WTC11 (cell line): ENCODE measurements at regions of chr19 and their contacts with region 1.

Region 1: DNA sequence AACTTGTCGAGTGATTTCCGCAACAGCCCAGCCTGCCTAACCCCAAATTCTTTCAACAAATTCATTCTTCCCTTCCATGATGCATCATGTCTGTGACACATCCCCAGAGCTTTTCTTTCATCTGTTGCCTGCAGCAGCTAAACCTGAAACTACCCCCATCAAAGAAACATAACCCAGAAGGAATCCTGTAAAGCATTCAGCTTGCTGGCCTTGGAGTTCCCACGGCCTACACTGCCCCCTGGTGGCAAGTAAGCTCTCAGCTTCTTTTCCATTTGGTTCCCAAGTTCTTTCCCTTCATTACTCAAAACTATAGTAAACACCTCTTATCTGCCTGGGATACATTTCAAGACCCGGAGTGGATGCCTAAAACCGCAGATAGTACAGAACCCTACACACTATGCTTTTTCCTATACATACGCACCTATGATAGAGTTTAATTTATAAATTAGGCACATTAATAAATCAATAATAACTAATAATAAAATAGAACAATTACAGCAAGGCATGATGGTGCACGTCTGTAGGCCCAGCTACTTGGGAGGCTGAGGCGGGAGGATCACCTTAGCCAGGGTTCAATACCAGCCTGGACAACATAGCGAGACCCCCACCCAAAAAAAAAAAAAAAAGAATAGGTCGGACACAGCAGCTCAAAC is 7.4 kb downstream of the ETHE1 start:
- DNase-seq: peak; percentile 83
- ATAC-seq: no peak; the same call in 1 of the 2 replicates
- H3K4me3 Mint-ChIP-seq: no peak overlapping the region
- H3K27ac Mint-ChIP-seq: peak overlapping the region; percentile 32; the same call in 1 of the 2 replicates
- H3K4me1 Mint-ChIP-seq: peaks cover 3% of the 10 kb centered on the region
- H3K27me3 Mint-ChIP-seq: no peaks in the 10 kb centered on the region
- CTCF ChIP-seq: peak; percentile 92

Region 2: GRCh38 chr19:43316592-43317319 is 202.8 kb before region 1 on chr19:
- CTCF ChIA-PET with region 1: no interaction called
- POLR2A ChIA-PET with region 1: no interaction called
- DNase-seq: peak; percentile 81
- ATAC-seq: peak; percentile 92
- H3K4me3 Mint-ChIP-seq: peak overlapping the region; percentile 28; the same call in 1 of the 2 replicates
- H3K27ac Mint-ChIP-seq: peak overlapping the region; percentile 61; the same call in 1 of the 2 replicates
- H3K4me1 Mint-ChIP-seq: peaks cover 27% of the 10 kb centered on the region
- H3K27me3 Mint-ChIP-seq: no peaks in the 10 kb centered on the region
- CTCF ChIP-seq: 0 out of 2 replicates have a peak, but pooled peaks have one; percentile 32

Region 3: DNA sequence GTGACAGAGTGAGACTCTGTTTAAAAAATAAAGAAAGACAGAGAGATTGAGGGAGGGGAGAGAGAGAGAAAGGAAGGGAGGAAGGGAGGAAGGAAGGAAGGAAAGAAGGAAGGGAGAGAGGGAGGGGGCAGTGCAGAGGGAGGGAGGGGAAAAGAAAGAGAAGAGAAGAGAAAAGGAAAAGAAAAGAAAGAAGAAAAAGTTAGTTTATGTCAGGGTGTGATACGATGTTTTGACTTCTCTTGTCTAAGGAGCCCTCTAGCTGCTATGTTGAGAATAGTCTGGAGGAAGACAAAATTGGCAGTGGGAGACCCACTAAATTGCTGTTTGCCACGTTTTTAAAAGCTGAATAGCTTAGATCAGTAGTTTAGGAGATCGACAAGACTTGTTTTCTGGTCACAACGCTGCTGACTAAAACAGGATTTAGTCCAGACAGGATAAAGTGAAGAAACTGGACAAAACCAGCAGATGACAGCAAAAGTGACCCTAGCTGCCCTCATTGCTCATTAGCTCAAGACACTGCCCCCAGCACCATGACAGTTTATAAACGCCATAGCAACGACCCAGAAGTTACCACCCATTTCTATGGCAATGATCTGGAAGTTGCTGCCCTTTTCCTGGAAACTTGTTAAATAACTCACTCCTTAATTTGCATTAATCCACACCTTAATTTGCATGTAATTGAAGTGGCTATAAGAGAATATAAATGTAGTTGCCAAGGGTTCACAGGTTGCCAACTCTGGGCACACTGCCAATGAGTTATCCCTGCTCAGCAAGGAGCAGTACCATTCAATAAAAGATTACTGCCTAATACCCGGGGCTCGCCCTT is 93.8 kb before region 1 on chr19:
- CTCF ChIA-PET with region 1: interaction called, 34 read pairs
- POLR2A ChIA-PET with region 1: no interaction called
- DNase-seq: no peak
- ATAC-seq: peak; percentile 67
- H3K4me3 Mint-ChIP-seq: no peak overlapping the region
- H3K27ac Mint-ChIP-seq: no peak overlapping the region
- H3K4me1 Mint-ChIP-seq: peaks cover 32% of the 10 kb centered on the region
- H3K27me3 Mint-ChIP-seq: no peaks in the 10 kb centered on the region
- CTCF ChIP-seq: no peak

Region 4: GRCh38 chr19:43446746-43447489 is 72.6 kb before region 1 on chr19:
- CTCF ChIA-PET with region 1: interaction called, 245 read pairs
- POLR2A ChIA-PET with region 1: interaction called, 3 read pairs
- DNase-seq: peak; percentile 84
- ATAC-seq: peak; percentile 92
- H3K4me3 Mint-ChIP-seq: peak overlapping the region; percentile 34; the same call in 1 of the 2 replicates
- H3K27ac Mint-ChIP-seq: 0 out of 2 replicates have a peak overlapping the region, but pooled peaks have one; percentile 5
- H3K4me1 Mint-ChIP-seq: peaks cover 10% of the 10 kb centered on the region
- H3K27me3 Mint-ChIP-seq: peaks cover 7% of the 10 kb centered on the region; the same call in 1 of the 2 replicates
- CTCF ChIP-seq: peak; percentile 91

Region 5: DNA sequence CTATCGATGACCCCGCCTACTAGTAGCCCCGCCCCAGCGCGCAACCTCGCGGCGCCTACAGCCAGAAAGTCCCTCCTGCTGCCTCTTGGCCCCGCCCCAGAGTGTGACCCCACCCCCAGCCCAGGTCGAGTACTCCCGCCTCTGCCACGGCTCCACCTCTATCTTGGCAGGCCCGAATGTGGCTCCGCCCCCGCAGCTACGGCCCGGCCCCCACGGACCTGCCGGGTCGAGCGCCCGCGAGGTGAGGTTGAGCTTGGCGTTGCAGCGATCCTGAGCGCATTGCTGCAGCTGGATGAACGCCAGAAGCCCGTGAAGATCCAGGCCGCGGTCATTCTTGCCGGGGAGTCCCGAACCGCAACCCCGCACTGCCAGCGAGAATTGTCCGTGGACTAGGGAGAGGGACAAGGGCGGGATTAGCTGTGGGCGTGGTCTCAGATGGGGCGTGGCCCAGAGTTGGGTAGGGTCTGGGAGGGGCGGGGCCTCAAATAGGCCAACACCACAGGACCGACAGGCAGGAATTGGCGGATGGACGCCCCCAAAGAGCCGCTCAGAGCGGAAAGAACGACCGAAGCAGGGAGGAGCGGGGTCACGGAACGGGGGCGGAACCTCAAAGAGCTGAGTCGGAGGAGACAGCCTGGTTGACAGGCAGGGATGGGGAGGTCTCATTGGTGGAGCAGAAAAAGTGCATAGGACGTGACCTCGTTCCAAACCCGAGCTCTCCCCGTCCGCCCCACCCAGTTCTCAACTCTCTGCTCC is 56.0 kb before region 1 on chr19:
- CTCF ChIA-PET with region 1: interaction called, 23 read pairs
- POLR2A ChIA-PET with region 1: no interaction called
- DNase-seq: peak; percentile 99
- ATAC-seq: peak; percentile 89
- H3K4me3 Mint-ChIP-seq: peak overlapping the region; percentile 91
- H3K27ac Mint-ChIP-seq: peak overlapping the region; percentile 99
- H3K4me1 Mint-ChIP-seq: peaks cover 14% of the 10 kb centered on the region
- H3K27me3 Mint-ChIP-seq: peaks cover 71% of the 10 kb centered on the region
- CTCF ChIP-seq: no peak

Region 6: GRCh38 chr19:43503501-43504425 is 15.8 kb before region 1 on chr19:
- CTCF ChIA-PET with region 1: interaction called, 30 read pairs
- POLR2A ChIA-PET with region 1: interaction called, 6 read pairs
- DNase-seq: peak; percentile 97
- ATAC-seq: peak; percentile 89
- H3K4me3 Mint-ChIP-seq: peak overlapping the region; percentile 91
- H3K27ac Mint-ChIP-seq: peak overlapping the region; percentile 74
- H3K4me1 Mint-ChIP-seq: peaks cover 21% of the 10 kb centered on the region
- H3K27me3 Mint-ChIP-seq: peaks cover 38% of the 10 kb centered on the region
- CTCF ChIP-seq: peak; percentile 25; the same call in 1 of the 2 replicates

Region 7: DNA sequence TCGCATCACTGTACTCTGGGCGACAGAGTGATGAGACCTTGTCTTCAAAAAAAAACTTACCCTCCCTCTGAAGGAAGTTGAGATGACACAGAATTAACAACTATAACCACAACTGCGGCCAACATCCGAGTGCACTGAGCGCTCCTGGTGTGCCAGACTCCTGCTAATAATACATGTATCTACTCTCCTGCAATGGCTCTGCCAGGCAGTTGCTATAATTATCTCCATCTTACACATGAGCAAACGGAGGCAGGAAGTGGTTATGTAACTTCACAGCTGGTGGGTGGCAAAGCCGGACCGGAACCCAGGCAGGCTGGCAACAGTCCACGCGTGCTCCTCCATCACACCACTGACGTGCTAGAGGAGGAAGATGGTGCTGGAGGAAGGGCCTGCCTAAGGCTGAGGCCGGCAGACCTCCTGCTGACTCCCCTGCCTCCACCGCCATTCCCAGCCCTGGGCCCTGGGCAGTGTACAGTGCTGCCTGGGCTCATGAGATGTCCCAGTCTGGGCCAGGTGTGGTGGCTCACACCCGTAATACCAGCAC is 43.2 kb after region 1 on chr19:
- CTCF ChIA-PET with region 1: no interaction called
- POLR2A ChIA-PET with region 1: no interaction called
- DNase-seq: no peak
- ATAC-seq: no peak
- H3K4me3 Mint-ChIP-seq: no peak overlapping the region
- H3K27ac Mint-ChIP-seq: no peak overlapping the region
- H3K4me1 Mint-ChIP-seq: no peaks in the 10 kb centered on the region
- H3K27me3 Mint-ChIP-seq: no peaks in the 10 kb centered on the region
- CTCF ChIP-seq: no peak